ENCODE measurements at regions of chr1 and their contacts with region 1.

Region 1: DNA sequence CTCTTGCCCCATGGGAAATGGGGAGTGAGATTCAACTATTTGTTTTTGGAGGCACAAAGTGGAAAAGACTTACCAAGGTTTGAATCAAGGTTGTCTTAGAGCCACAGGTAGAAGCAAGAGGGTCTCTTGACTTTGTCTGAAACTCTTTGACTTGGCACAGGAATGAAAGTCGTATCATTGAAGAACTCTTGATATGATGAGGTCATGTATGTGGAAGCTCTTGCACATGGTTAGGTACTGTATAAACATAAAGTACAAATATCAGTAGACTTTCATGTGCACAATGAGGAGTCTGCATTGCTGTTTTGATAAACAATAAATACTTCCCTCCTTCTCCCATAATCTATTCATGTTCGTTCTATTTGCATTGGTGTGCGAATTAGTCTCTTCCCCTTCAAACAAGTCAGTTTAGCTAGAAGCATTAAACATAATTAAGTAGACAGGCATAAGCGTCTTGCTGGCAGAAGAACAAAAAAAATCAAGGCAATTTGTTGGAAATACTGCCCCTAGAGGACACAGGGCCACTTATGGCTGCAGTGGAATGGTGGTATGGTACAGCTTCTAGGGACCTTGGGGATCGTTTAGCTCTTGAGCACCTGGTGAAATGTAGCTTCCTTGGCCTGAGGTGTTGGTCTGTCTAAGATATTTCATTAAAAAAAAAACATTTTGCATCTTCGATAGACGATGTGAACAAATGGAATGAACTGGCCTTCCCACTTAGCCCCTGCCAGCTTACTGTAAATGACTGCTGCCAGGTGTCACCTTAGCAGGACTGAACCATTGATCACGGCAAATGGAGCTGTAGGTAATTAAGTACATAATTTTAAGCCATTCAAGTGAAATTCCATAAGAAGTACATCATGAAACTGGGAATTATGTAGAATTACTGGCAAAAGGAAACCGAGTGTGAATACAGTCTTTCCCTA is 218.0 kb upstream of the GALNT2 start:
- DNase-seq: peak; percentile 74

Region 2: DNA sequence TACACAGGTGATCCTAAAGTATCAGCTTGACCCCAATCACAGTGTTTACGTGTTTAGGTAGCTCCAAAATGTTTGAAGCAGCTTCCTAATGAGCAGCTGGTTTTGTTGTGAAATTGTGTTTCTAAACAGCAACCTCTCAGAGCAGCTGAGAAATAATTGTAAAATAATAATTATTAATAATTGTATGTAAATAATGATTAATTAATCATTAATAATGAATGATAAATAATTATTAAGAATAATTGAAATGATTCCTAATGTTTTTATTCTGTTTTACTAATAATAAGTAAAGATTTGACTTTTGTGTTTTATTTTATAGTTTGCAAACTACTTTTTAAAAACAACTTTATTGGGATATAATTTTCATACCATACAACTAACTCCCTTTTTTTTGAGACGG is 40.7 kb before region 1 on chr1:
- CTCF ChIA-PET with region 1: no interaction called
- POLR2A ChIA-PET with region 1: no interaction called
- DNase-seq: no peak

Region 3: DNA sequence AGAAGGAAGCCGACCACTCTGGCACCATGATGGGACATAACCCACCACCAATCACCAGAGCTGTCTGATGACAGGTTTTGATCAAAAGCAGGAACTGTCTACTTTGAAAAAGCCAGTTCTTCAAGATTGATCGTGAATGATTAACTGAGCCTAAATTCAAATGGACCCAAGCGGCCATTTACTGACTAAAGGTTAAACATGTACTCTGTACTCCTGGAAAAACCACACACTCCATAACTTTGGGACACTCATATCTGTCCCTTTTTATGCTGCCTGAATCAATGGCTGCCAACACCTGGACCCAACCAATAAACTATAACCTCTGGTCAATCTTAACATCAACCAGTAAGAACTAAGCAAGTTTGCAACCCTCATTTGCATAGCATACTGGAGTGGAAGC is 16.3 kb before region 1 on chr1:
- CTCF ChIA-PET with region 1: interaction called, 10 read pairs
- POLR2A ChIA-PET with region 1: no interaction called
- DNase-seq: no peak

Region 4: GRCh38 chr1:229862017-229862774 is 13.2 kb after region 1 on chr1:
- CTCF ChIA-PET with region 1: interaction called, 15 read pairs
- POLR2A ChIA-PET with region 1: no interaction called
- DNase-seq: no peak

Measured in HEK293T (cell line).